Activated T-helper 1 cell treated with anti-CD3 and anti-CD28 coated beads, Interleukin-12 subunit alpha, Interleukin-12 subunit beta, Interleukin-2, Interleukin-4 antibody, amounts not matched to agents 30 ng/mL and 10 ng/mL and 1 ng/mL, durations not matched to agents 14 hours and 24 hours and 36 hours (primary cell): ENCODE measurements at regions of chr6 and their contacts with region 1.

Region 1: GRCh38 chr6:13624871-13625288 is 9.7 kb downstream of the NOL7 start:
- DNase-seq: no peak
- H3K4me3 Mint-ChIP-seq: no peak overlapping the region
- H3K27ac Mint-ChIP-seq: peak overlapping the region; percentile 36
- H3K4me1 Mint-ChIP-seq: peaks cover 34% of the 10 kb centered on the region
- H3K27me3 Mint-ChIP-seq: no peaks in the 10 kb centered on the region

Region 2: DNA sequence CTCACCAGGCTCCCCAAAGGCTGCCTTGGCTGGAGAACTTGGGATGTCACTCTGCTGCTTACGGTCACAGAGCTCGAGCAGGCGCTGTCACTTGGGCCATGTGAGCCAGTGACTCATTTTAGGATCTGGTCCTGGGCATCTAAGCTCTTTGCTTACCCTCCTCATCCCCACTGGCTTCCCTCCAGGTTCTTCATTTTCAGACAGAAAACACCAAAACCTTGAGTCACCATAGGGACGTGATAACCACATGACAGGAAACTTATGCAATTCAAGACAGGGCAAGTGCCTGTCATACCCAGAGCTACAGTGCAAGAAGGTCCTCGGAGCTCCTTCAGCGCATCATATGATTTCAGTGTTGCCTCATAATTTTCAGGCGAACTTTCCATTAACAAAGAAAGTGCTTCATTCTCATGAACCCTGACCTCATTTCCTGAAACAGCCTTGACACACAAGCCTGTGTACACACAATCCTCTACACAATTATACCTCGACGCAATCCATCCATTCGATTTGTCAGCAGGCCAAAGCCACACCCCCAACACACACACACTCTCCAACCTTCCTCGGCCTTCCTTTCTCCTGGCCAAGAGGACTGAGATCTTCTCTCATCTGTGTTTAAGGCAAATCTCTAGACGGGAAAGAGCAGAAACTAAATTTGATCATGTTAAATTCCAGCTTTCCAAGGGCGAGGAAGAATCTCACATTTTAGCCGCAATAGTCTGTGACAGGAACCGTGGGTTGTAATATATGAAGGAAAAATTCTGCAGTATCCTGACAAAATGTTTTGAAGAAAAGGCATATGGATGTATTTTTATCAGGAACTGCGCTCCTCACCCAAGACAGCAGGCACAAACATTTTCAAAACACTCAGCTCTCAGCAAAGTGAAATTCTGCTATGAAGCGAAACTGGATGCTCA is 321.9 kb before region 1 on chr6:
- intact Hi-C with region 1: no loop called
- DNase-seq: peak; percentile 65
- H3K4me3 Mint-ChIP-seq: peak overlapping the region; percentile 61
- H3K27ac Mint-ChIP-seq: peak overlapping the region; percentile 87
- H3K4me1 Mint-ChIP-seq: peaks cover 43% of the 10 kb centered on the region
- H3K27me3 Mint-ChIP-seq: no peaks in the 10 kb centered on the region

Region 3: DNA sequence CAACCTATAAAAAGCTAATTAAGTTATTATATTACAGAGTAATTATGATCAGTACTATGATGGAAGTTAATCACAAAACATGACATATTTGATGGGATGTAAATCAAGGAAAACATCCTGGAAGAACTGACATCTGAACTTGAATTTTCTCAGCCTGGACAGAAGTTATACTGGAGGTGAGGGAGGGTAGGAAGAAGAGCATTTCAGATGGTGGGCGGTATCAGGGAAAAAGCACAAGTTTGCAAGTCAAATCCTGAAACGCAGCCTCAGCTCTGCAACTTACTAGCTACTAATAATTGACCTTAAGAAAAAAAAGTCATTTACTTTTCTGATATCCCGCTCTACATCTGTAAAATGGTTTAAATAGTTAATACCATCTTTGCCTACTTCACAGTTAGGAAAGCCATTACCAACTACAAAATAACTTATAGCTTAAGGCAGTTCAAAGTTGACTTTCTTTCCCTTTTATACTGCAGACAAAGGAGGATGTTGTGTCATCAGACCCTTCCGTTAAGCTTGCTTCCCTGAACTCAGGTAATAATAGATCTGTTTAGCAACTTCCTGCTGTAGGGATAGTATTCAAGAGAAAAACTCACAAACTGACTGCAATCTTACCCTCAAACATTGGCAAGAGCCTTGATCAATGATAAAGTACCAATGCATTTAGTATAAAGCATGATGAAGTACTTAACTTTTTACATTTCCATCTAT is 11.2 kb after region 1 on chr6:
- intact Hi-C with region 1: loop called (anchors 1 kb)
- DNase-seq: no peak
- H3K4me3 Mint-ChIP-seq: no peak overlapping the region
- H3K27ac Mint-ChIP-seq: peak overlapping the region; percentile 34
- H3K4me1 Mint-ChIP-seq: peaks cover 44% of the 10 kb centered on the region
- H3K27me3 Mint-ChIP-seq: no peaks in the 10 kb centered on the region

Region 4: DNA sequence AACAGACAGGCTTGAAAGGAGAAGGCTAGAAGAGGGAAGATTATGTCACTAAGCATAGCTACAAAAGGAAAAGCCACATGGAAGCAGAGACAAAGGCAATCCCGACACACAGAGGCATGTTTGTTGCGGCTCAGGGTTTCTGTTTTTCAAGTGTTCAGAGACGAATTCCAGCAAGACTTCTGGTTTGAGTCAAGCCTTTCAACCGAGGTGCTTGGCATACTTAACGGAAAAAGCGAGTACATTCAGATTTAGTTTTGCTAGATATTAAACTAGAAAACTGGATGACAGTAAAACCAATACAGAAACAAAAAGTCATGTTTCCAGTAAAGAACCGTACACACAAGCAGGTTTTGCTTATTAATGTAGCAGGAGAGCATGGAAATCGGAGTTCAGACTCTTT is 162.3 kb after region 1 on chr6:
- intact Hi-C with region 1: loop called (anchors 5 kb)
- DNase-seq: no peak
- H3K4me3 Mint-ChIP-seq: peak overlapping the region; percentile 41
- H3K27ac Mint-ChIP-seq: peak overlapping the region; percentile 82
- H3K4me1 Mint-ChIP-seq: peaks cover 33% of the 10 kb centered on the region
- H3K27me3 Mint-ChIP-seq: no peaks in the 10 kb centered on the region